Activated B cell treated with CpG ODN at 0.5 μM for 24 hours (primary cell): ENCODE measurements at regions of chr2 and their contacts with region 1.

Region 1: DNA sequence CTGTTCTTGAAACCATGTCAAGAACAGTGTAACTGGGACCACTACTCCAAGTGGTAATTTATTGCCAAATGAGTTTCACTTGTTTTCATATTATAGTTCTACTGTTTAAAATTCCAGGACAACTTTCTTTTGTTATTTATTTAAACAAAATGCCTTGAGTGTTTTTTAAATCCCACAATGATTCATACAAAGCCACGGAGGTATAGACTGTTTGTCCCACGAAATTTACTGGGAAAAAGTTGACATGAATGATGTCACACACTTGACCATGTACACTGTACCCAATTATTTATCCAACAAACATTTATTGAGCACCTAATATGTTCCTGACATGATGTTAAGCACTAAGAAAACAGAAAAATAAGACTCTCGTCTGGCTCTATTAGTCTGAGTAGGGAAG is 243.9 kb upstream of the SIX2 start:
- DNase-seq: no peak
- ATAC-seq: no peak
- H3K4me3 Mint-ChIP-seq: no peak overlapping the region
- H3K27ac Mint-ChIP-seq: no peak overlapping the region
- H3K4me1 Mint-ChIP-seq: no peaks in the 10 kb centered on the region
- H3K27me3 Mint-ChIP-seq: no peaks in the 10 kb centered on the region
- CTCF ChIP-seq: no peak

Region 2: DNA sequence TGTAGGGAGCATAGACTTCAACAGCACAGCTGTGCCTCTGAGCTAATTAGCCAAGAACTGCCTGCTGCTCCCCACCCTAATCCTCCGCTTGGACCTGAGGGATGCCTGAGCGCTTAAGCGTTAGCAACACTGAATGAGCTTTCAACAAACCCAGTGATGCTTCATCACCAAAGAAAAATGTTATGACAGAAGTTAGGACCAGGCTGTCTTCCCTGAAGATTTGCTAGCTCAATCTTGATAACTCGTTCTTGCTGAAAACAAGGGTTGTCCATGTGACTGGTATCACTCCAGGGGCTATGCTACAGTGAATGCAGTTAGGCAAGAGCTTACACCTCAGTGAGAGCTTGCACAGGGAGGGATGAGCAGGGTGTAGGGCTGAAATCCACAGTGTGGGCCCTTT is 53.2 kb before region 1 on chr2:
- CTCF ChIA-PET with region 1: no interaction called
- POLR2A ChIA-PET with region 1: no interaction called
- intact Hi-C with region 1: no loop called
- DNase-seq: no peak
- ATAC-seq: no peak
- H3K4me3 Mint-ChIP-seq: no peak overlapping the region
- H3K27ac Mint-ChIP-seq: no peak overlapping the region
- H3K4me1 Mint-ChIP-seq: no peaks in the 10 kb centered on the region
- H3K27me3 Mint-ChIP-seq: peaks cover 4% of the 10 kb centered on the region
- CTCF ChIP-seq: no peak

Region 3: GRCh38 chr2:45337481-45337880 is 84.3 kb after region 1 on chr2:
- CTCF ChIA-PET with region 1: no interaction called
- POLR2A ChIA-PET with region 1: no interaction called
- intact Hi-C with region 1: loop called (anchors 5 kb)
- DNase-seq: no peak
- ATAC-seq: no peak
- H3K4me3 Mint-ChIP-seq: no peak overlapping the region
- H3K27ac Mint-ChIP-seq: no peak overlapping the region
- H3K4me1 Mint-ChIP-seq: no peaks in the 10 kb centered on the region
- H3K27me3 Mint-ChIP-seq: peaks cover 2% of the 10 kb centered on the region
- CTCF ChIP-seq: no peak